Left ventricle myocardium superior (tissue), 1 donor: ENCODE measurements at regions of chr10 and their contacts with region 1.

Region 1: GRCh38 chr10:123559066-123559822 is 106.9 kb upstream of the GPR26 start:
- DNase-seq: peak; percentile 73
- ATAC-seq: peak; percentile 77

Region 2: GRCh38 chr10:123132576-123133477 is 426.4 kb before region 1 on chr10:
- intact Hi-C with region 1: loop called (anchors 5 kb)
- DNase-seq: peak; percentile 87
- ATAC-seq: peak; percentile 90